ENCODE measurements at regions of chr3 and their contacts with region 1.

Region 1: GRCh38 chr3:102673271-102674115 is 238.7 kb downstream of the ZPLD1 start:
- DNase-seq: peak; percentile 38 to 87
- H3K4me3 ChIP-seq: no peak overlapping the region; a peak in 1 of 8 replicates
- H3K27ac ChIP-seq: no peak overlapping the region
- H3K4me1 ChIP-seq: peaks cover 0 to 4% (median 2%) of the 10 kb centered on the region in 4 experiments; a peak in 4 of 7 replicates
- H3K27me3 ChIP-seq: no peaks in the 10 kb centered on the region
- CTCF ChIP-seq: peak; percentile 69 to 76 (median 75)
- EP300 ChIP-seq: no peak
- POLR2A ChIP-seq: no peak
- RAD21 ChIP-seq: peak; percentile 94

Region 2: DNA sequence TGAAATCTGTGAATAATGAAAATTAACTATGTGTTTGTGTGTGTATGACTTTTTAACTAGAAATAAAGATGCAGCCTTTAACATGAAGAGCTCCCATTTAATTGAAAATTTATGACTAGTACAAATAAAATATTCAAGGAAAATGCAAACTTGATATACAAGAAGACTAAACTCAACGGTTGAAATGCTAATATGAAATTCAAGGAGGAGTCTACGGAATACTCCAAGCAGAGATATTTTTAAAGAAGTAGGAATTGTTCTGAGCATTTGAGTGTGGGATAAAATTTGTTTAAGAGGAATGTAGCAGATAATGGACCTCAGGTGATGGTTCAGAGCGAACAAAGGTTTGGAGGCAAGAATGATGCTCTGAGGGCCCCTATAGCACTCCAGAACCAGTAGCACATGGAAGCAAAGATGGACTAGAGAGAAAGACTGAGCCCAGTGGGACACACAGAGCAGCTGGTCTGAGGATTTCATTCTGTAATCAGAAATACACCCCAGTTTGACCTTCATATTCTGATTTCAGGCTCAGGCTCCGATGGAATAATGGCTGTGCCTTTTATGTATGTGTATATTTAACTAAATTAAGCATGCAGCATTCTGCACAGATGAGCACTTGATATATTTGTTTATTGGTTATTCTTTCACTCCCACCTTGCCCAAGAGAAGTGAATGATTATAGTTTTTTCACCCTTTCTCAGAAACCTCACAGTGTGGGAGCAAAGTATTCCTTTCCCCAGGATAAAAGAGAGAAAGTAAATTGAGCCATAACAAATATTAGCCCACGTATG is 11.6 kb before region 1 on chr3:
- CTCF ChIA-PET with region 1: interaction called, 16 read pairs
- POLR2A ChIA-PET with region 1: no interaction called
- DNase-seq: no peak
- H3K4me3 ChIP-seq: no peak overlapping the region
- H3K27ac ChIP-seq: no peak overlapping the region
- H3K4me1 ChIP-seq: no peaks in the 10 kb centered on the region
- H3K27me3 ChIP-seq: no peaks in the 10 kb centered on the region
- CTCF ChIP-seq: no peak
- EP300 ChIP-seq: no peak
- POLR2A ChIP-seq: no peak
- RAD21 ChIP-seq: no peak

Region 3: GRCh38 chr3:102686792-102687191 is 13.3 kb after region 1 on chr3:
- CTCF ChIA-PET with region 1: interaction called, 22 read pairs
- POLR2A ChIA-PET with region 1: no interaction called
- DNase-seq: no peak
- H3K4me3 ChIP-seq: no peak overlapping the region; a peak in 1 of 8 replicates
- H3K27ac ChIP-seq: no peak overlapping the region
- H3K4me1 ChIP-seq: peaks cover 0 to 11% (median 3%) of the 10 kb centered on the region in 4 experiments; a peak in 1 of 7 replicates
- H3K27me3 ChIP-seq: peaks cover 0 to 1% (median 0%) of the 10 kb centered on the region in 4 experiments; a peak in 1 of 7 replicates
- CTCF ChIP-seq: no peak
- EP300 ChIP-seq: no peak
- POLR2A ChIP-seq: no peak
- RAD21 ChIP-seq: no peak

Region 4: DNA sequence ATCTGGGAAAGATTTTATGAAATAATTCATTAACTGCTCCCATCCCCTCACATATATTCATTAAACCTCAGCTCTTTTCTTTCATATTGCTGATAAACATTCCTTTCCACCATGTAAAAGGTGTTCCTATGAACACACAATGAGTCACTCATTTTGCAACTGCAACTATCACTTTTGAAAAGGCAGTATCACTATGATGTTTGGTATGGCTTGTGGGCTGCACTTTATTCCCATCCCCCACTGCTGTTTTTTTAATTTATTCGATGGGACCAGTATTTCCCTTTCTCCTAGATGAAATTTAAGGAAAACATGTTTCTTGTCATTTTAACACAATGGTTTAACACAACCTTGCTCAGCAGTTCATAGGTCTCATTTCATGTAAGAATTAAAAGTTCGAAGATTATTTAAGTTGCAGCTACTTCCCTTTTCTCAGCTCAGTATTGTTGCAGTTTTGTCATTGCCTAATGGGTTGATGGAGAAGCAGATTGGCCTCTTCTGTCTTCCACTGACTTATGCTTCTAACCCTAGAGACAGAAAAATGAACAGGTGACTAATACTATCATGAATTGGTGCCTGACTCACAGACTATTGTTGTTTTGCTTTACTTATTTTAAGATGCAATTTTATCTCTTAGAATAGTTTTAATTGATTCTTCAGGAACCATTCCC is 41.7 kb after region 1 on chr3:
- CTCF ChIA-PET with region 1: interaction called, 11 read pairs
- POLR2A ChIA-PET with region 1: no interaction called
- DNase-seq: no peak
- H3K4me3 ChIP-seq: no peak overlapping the region
- H3K27ac ChIP-seq: no peak overlapping the region
- H3K4me1 ChIP-seq: no peaks in the 10 kb centered on the region
- H3K27me3 ChIP-seq: no peaks in the 10 kb centered on the region
- CTCF ChIP-seq: no peak
- EP300 ChIP-seq: no peak
- POLR2A ChIP-seq: no peak
- RAD21 ChIP-seq: no peak

Region 5: GRCh38 chr3:102733791-102734574 is 60.5 kb after region 1 on chr3:
- CTCF ChIA-PET with region 1: interaction called, 78 read pairs
- POLR2A ChIA-PET with region 1: no interaction called
- DNase-seq: no peak
- H3K4me3 ChIP-seq: no peak overlapping the region
- H3K27ac ChIP-seq: no peak overlapping the region
- H3K4me1 ChIP-seq: peaks cover 0 to 8% (median 2%) of the 10 kb centered on the region in 4 experiments; a peak in 2 of 7 replicates
- H3K27me3 ChIP-seq: no peaks in the 10 kb centered on the region
- CTCF ChIP-seq: no peak
- EP300 ChIP-seq: no peak
- POLR2A ChIP-seq: no peak
- RAD21 ChIP-seq: no peak

Region 6: GRCh38 chr3:102741108-102741507 is 67.6 kb after region 1 on chr3:
- CTCF ChIA-PET with region 1: interaction called, 78 read pairs
- POLR2A ChIA-PET with region 1: no interaction called
- DNase-seq: no peak
- H3K4me3 ChIP-seq: no peak overlapping the region
- H3K27ac ChIP-seq: no peak overlapping the region
- H3K4me1 ChIP-seq: no peaks in the 10 kb centered on the region
- H3K27me3 ChIP-seq: no peaks in the 10 kb centered on the region
- CTCF ChIP-seq: peak; percentile 14 to 56 (median 53)
- EP300 ChIP-seq: no peak
- POLR2A ChIP-seq: no peak
- RAD21 ChIP-seq: peak; percentile 59 to 75